Mammary epithelial cell (primary cell): ENCODE measurements at regions of chr10 and their contacts with region 1.

Region 1: GRCh38 chr10:88835096-88835909 is 16.3 kb downstream of the ANKRD22 start:
- DNase-seq: peak; percentile 78
- H3K4me3 ChIP-seq: no peak overlapping the region
- H3K27ac ChIP-seq: no peak overlapping the region
- H3K4me1 ChIP-seq: no peaks in the 10 kb centered on the region
- H3K27me3 ChIP-seq: no peaks in the 10 kb centered on the region
- CTCF ChIP-seq: peak; percentile 86 to 90

Region 2: GRCh38 chr10:88565072-88565471 is 270.2 kb before region 1 on chr10:
- CTCF ChIA-PET with region 1: interaction called, 8 read pairs
- dilution Hi-C with region 1: no loop called
- in situ Hi-C with region 1: no loop called
- intact Hi-C with region 1: loop called (anchors 1 kb)
- DNase-seq: peak; percentile 13
- H3K4me3 ChIP-seq: no peak overlapping the region
- H3K27ac ChIP-seq: no peak overlapping the region
- H3K4me1 ChIP-seq: no peaks in the 10 kb centered on the region
- H3K27me3 ChIP-seq: no peaks in the 10 kb centered on the region
- CTCF ChIP-seq: peak; percentile 40 to 43

Region 3: GRCh38 chr10:88865281-88865876 is 30.1 kb after region 1 on chr10:
- CTCF ChIA-PET with region 1: no interaction called
- dilution Hi-C with region 1: no loop called
- in situ Hi-C with region 1: no loop called
- intact Hi-C with region 1: loop called (anchors 1 kb)
- DNase-seq: peak; percentile 27
- H3K4me3 ChIP-seq: no peak overlapping the region
- H3K27ac ChIP-seq: no peak overlapping the region
- H3K4me1 ChIP-seq: no peaks in the 10 kb centered on the region
- H3K27me3 ChIP-seq: no peaks in the 10 kb centered on the region
- CTCF ChIP-seq: peak; percentile 30 to 58

Region 4: GRCh38 chr10:88880282-88881076 is 45.2 kb after region 1 on chr10:
- CTCF ChIA-PET with region 1: no interaction called
- dilution Hi-C with region 1: no loop called
- in situ Hi-C with region 1: no loop called
- intact Hi-C with region 1: loop called (anchors 5 kb)
- DNase-seq: peak; percentile 83
- H3K4me3 ChIP-seq: peak overlapping the region; percentile 76 to 96 (median 78)
- H3K27ac ChIP-seq: peak overlapping the region; percentile 71
- H3K4me1 ChIP-seq: peaks cover 35% of the 10 kb centered on the region
- H3K27me3 ChIP-seq: no peaks in the 10 kb centered on the region
- CTCF ChIP-seq: peak in 1 of 2 donors; percentile 44

Region 5: GRCh38 chr10:88990384-88991160 is 155.3 kb after region 1 on chr10 and contains the start of gene FAS:
- CTCF ChIA-PET with region 1: no interaction called
- dilution Hi-C with region 1: no loop called
- in situ Hi-C with region 1: no loop called
- intact Hi-C with region 1: loop called (anchors 1 kb)
- DNase-seq: peak; percentile 96
- H3K4me3 ChIP-seq: peak within 1 kb of the TSS; percentile 87 to 94 (median 93)
- H3K27ac ChIP-seq: peak within 1 kb of the TSS; percentile 97
- H3K4me1 ChIP-seq: peaks cover 27% of the 10 kb centered on the region
- H3K27me3 ChIP-seq: no peaks in the 10 kb centered on the region
- CTCF ChIP-seq: no peak
- total RNA-seq, gene FAS: 50.0 to 71.8 TPM

Region 6: GRCh38 chr10:89001024-89001728 is 165.9 kb after region 1 on chr10:
- CTCF ChIA-PET with region 1: no interaction called
- dilution Hi-C with region 1: loop called (anchors 25 kb)
- in situ Hi-C with region 1: no loop called
- intact Hi-C with region 1: no loop called
- DNase-seq: no peak
- H3K4me3 ChIP-seq: no peak overlapping the region
- H3K27ac ChIP-seq: peak overlapping the region; percentile 96
- H3K4me1 ChIP-seq: peaks cover 16% of the 10 kb centered on the region
- H3K27me3 ChIP-seq: no peaks in the 10 kb centered on the region
- CTCF ChIP-seq: no peak